Ascending aorta (tissue), 2 donors: ENCODE measurements at regions of chr3 and their contacts with region 1.

Region 1: GRCh38 chr3:107753480-107753879 is 230.7 kb downstream of the BBX start:
- DNase-seq: peak in 1 of 2 donors; percentile 64
- H3K4me3 ChIP-seq: no peak overlapping the region
- H3K27ac ChIP-seq: no peak overlapping the region
- H3K4me1 ChIP-seq: no peaks in the 10 kb centered on the region
- H3K27me3 ChIP-seq: no peaks in the 10 kb centered on the region
- CTCF ChIP-seq: peak; percentile 24 to 58 (median 46)

Region 2: GRCh38 chr3:107240183-107241091 is 513.0 kb before region 1 on chr3:
- intact Hi-C with region 1: no loop called
- DNase-seq: peak in 1 of 2 donors; percentile 83
- H3K4me3 ChIP-seq: peak overlapping the region; percentile 78 to 92
- H3K27ac ChIP-seq: peak overlapping the region; percentile 79 to 80
- H3K4me1 ChIP-seq: peaks cover 0 to 12% of the 10 kb centered on the region in 2 donors
- H3K27me3 ChIP-seq: no peaks in the 10 kb centered on the region
- CTCF ChIP-seq: no peak

Region 3: DNA sequence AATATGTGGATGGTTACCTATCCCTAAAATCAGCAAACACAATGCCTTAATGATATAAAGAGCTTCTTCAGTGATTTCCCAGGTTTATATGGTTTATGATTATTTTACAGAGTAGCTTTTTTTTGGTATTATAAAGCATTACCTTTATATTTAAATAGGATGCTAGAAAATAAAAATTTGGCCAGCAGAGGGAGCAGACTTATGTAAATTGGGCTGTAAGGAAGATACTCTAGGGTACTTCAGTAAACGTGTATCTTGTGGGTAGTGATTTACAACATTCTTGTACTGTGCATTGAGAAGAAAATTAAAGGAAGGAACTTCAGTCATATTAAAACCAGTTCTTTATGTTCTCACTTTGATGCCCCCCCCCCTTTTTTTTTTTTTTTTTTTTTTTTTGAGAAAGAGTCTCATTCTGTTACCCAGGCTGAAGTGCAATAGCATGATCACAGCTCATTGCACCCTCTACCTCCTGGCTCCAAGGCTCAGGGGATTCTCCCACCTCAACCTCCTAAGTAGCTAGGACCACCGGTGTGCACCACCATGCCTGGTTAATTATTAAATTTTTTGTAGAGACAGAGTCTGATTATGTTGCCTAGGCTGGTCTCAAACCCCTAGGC is 62.9 kb before region 1 on chr3:
- intact Hi-C with region 1: no loop called
- DNase-seq: no peak
- H3K4me3 ChIP-seq: no peak overlapping the region
- H3K27ac ChIP-seq: no peak overlapping the region
- H3K4me1 ChIP-seq: no peaks in the 10 kb centered on the region
- H3K27me3 ChIP-seq: no peaks in the 10 kb centered on the region
- CTCF ChIP-seq: peak in 2 of 3 experiments; percentile 20 to 46

Region 4: GRCh38 chr3:107794664-107795443 is 41.4 kb after region 1 on chr3:
- intact Hi-C with region 1: loop called (anchors 5 kb)
- DNase-seq: no peak
- H3K4me3 ChIP-seq: no peak overlapping the region
- H3K27ac ChIP-seq: peak overlapping the region; percentile 15 to 67
- H3K4me1 ChIP-seq: peaks cover 6 to 41% of the 10 kb centered on the region in 2 donors
- H3K27me3 ChIP-seq: no peaks in the 10 kb centered on the region
- CTCF ChIP-seq: peak in 2 of 3 experiments; percentile 30 to 36

Region 5: DNA sequence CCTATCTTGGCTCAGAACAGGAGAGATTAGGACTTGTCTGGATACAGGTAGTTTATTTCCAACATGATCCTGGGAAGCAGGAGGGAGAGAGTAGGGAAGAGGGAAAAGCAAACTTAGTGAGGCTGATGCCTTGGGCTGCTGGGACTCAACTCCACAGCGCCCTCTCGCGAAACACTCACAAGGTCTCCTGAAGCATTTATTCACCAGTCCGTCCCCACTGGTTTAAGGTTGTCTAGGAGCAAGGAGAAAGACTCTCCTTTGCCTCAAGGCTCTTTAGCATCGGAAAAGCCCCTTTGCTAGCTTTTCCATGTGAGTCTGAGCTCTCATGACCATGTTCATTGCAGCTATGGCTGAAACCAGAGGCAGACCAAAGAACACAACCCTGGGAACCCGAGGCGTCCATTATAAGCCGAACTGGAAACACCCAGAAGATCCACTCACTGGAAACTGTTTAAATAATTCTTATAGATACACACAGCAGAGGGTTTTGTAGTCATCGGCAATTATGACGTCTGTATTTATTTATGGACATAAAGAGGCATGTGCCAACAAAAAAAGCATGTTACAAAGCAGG is 92.9 kb after region 1 on chr3:
- intact Hi-C with region 1: loop called (anchors 1 kb)
- DNase-seq: peak in 1 of 2 donors; percentile 73
- H3K4me3 ChIP-seq: no peak overlapping the region
- H3K27ac ChIP-seq: no peak overlapping the region
- H3K4me1 ChIP-seq: no peaks in the 10 kb centered on the region
- H3K27me3 ChIP-seq: no peaks in the 10 kb centered on the region
- CTCF ChIP-seq: peak; percentile 41 to 66 (median 55)

Region 6: DNA sequence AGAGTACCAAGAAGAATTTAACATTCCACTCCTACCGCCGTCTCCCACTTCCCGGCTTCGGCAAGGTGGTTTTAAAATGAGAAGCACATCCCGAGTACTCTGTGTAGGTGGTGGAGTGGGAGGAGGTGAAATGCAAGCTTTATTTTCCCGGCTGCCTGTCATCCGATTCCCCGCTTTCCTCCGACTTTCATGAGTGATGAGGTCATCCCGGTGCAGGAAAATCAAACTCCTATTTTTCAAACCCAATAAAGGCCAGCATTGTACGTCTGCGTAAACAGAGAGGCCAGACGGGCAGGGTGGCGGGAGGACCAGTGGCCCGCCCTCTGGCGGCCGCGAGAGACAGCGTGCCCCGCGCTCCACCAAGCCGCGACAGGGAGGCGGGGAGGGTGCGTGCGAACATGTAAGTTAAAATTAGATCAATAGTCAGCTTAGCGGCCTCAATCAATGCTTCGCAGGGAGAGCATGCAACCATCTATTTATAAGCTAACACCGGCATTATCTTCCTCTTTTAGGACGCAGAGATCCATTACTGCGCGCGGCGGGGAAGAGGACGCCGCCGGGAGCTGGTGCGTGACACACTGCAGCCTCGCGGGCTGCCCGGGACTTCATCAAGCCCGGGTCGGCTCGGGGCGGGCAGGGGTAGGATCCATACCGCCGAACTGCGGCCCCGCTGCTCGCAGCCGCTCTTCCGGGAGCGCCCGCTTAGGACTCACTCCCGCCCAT is 174.0 kb after region 1 on chr3:
- intact Hi-C with region 1: loop called (anchors 10 kb)
- DNase-seq: peak in 1 of 2 donors; percentile 83
- H3K4me3 ChIP-seq: peak overlapping the region; percentile 51 to 75
- H3K27ac ChIP-seq: no peak overlapping the region
- H3K4me1 ChIP-seq: no peaks in the 10 kb centered on the region
- H3K27me3 ChIP-seq: no peaks in the 10 kb centered on the region
- CTCF ChIP-seq: peak; percentile 70 to 96 (median 91)

Region 7: GRCh38 chr3:107992981-107993684 is 239.7 kb after region 1 on chr3:
- intact Hi-C with region 1: no loop called
- DNase-seq: no peak
- H3K4me3 ChIP-seq: no peak overlapping the region
- H3K27ac ChIP-seq: no peak overlapping the region
- H3K4me1 ChIP-seq: peaks cover 0 to 4% of the 10 kb centered on the region in 2 donors
- H3K27me3 ChIP-seq: no peaks in the 10 kb centered on the region
- CTCF ChIP-seq: no peak